Right ventricle myocardium inferior (tissue), 1 donor: ENCODE measurements at regions of chr10 and their contacts with region 1.

Region 1: GRCh38 chr10:34815185-34816084 is at the start of gene PARD3:
- DNase-seq: peak; percentile 76
- ATAC-seq: peak; percentile 84
- total RNA-seq, gene PARD3: 34.6 TPM

Region 2: DNA sequence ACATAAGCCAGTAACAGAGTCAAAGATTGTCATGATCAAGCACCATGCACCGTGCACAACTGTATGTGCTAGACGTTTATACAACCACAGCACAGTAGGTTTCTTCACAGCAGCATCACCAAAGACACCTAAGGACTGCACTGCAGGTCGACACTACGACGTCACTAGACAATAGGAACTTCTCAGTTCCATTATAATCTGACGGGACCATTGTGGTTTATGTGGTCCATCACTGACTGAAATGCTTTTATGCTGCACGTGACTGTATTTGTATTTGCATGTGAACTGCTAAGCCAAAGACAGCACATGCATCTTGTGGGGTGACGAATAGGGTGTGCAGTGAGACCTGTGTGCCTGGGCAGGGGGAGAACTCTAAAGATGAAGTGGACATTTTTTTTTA is 165.3 kb before region 1 on chr10:
- intact Hi-C with region 1: loop called (anchors 5 kb)
- DNase-seq: no peak
- ATAC-seq: no peak

Region 3: DNA sequence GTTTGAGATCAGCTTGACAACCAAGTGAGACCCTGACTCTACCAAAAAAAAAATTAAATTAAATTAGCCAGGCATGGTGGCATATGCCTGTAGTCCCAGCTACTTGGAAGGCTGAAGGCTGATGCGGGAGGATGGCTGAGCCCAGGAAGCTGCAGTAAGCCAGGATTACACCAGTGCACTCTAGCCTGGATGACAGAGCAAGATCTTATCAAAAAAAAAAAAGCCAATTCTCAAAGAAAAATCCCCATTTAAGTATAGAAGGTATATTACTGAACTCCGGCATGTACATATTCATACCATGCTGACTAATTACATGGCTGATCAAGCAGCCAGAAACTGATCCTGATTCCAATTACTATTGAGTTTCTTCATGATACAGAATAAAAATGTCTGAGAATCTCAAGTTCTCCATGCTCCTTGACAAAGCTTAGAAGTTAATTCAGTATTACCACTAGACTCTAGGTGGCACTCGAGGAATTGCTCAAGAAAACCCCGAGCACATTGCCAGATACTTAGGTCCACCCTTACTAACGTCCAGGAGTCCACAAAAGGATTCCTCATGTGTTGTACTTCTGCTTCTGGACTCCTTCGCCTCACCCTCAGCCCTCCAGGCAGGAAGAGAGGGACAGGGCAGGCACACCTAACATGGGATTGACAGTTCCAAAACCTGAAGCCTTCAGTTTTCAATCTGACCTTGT is 149.3 kb before region 1 on chr10:
- intact Hi-C with region 1: loop called (anchors 5 kb)
- DNase-seq: no peak
- ATAC-seq: peak; percentile 86

Region 4: DNA sequence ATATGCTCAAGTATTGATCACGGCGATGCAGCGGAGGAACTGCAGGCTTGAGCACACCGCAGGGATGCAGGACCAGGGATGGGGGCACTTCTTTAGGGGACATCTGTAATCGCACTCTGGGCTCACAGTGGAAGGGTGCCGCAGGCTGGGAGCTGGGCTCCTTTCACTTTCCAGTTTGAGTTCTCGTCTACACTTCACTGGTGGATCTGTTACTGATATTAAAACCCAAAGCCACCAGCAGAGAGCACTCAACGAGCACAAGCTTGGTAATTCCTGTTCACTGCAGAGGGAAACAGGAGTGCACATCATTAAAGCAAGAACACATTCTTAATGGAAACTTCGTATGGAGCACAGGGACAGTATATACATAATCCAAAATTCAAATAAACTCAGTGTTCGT is 91.7 kb before region 1 on chr10:
- intact Hi-C with region 1: loop called (anchors 2 kb)
- DNase-seq: no peak
- ATAC-seq: peak; percentile 81

Region 5: DNA sequence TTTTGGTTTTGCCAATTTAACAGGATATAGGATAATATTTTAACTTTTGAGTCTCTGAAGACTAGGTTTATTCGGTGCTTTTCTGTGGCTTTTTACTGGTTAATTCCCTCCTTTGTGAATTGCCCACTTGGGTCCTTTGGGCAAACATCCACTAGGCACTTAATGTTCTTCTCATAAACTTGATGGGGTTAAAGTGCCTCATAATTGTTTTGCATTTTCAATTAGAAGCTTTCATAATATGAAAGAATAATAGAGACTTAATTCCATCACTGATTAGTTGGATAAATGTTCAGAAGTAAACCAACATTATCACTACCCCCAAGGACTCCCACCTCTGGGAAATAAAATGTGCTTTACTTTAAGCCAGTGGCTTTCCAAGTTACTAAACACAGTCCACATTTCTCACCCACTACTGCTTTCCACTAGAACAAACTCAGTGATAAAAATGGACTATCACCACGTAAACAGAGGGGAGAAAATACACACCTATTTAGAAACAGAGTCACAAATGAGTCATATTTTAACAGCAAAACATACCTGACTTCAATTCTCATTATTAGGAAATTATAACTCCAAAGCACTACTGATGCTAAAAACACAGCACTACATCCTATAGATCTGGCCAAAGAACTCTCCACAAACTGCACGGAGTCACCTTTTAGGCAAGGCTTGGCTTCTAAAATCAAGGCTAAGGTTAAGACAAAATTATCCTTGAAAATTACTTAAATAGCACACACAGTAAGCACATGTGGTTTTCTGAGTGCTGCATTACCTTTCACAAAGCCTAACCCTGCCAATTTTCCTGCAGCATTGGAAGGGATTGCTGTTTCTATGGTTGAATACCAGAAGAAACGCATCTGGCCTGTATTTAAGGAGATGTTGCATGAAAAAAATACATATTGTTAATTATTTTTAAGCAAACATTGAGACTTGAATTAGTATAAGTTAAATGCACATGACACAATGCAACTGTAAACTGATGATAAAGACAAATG is 41.5 kb before region 1 on chr10:
- intact Hi-C with region 1: loop called (anchors 5 kb)
- DNase-seq: no peak
- ATAC-seq: no peak

Region 6: DNA sequence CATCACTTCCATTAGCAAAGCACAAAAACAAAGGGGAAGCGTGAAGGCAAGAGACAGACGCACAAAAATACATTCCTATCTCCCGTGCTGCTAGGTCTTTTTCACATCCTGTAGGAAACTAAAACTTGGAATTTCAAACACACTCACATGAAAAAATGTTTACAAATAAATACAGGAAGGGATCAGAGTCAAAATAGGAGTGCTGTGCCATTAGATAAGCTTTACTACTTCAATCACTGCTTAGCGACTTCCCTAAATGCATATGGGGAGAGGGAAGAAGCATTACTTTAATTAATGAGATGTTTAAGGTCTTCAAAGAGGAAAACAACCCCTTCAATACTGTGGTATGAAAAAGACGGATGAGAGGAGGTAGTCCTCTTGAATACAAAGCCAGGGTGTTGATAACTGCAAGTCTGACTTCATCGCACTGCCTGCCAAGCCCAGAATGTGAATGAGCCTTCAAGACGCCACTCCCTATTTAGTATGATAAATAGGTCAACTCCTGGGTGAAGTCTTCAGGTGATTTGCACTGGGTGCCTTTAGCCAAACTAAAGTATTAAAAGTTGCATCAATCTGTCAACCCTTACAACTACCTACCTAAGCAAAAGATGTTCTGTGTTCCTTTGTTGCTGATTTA is 14.2 kb before region 1 on chr10:
- intact Hi-C with region 1: no loop called
- DNase-seq: no peak
- ATAC-seq: peak; percentile 77

Region 7: GRCh38 chr10:34933676-34934075 is 118.2 kb after region 1 on chr10:
- intact Hi-C with region 1: loop called (anchors 10 kb)
- DNase-seq: peak; percentile 81
- ATAC-seq: peak; percentile 93

Region 8: DNA sequence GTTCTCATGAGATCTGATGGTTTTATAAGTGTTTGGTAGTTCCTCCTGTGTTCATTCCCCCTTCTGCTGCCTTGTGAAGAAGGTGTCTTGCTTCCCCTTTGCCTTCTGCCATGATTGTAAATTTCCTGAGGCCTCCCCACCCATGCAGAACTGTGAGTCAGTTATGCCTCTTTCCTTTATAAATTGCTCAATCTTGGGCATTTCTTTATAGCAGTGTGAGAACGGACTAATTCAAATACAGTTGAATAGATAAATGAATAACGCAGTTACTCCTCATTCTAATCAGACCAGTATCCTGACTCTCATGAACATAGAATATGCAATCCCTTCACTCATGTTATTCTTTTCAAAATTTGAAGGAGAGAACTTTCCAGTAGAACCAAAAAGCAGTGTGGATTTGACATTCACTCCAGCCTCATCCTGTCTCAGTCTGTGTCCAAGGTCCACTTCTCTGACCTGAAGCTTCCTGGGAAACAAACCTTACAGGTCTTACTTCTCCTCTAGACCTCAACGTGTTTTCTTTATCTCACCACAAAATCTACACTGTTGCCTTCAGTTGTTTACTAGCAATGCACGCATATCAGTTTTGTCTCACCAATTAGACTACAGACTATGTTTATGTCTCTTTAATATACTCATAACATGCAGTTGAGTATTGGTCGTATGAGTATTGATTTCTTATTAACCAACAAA is 1201.8 kb after region 1 on chr10:
- intact Hi-C with region 1: no loop called
- DNase-seq: no peak
- ATAC-seq: no peak